ENCODE measurements at regions of chr2 and their contacts with region 1.

Region 1: DNA sequence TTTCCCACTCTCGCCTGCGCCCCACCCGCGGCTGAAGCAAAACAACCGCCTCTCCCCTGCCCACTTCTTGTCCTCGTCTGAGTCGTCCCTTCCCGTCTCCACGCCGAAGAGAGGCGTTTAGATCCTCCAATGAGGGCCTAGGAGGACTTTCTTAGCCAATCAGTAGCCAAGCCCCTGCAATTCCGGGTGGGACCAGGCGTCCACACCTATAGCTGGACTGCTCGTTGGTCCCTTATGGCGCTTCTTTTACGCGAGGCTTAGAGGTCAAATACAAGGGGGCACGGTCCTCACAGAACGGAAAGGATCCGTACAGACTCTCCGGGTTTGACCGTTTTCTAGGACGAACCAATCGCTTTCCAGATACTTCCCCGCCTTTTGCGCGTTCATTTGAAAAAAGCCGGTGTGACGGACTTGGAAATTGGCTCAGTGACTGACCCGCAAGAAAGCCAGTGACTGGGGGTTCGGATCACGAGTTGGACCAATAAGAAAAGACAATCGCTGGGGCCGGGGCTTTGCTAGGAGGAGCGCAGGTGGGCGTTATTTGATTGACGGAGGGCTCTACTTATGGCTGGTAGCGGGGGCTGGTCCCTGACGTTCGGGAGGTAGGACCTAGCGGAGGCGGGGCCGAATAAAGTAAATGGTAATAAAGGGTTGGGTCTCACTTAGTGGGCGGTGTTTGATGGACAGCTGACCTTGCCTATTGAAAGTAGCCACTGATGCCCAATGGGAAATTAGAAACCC is 565 bp upstream of the PPM1B start:
- DNase-seq: peak; percentile 99
- H3K4me3 Mint-ChIP-seq: peak overlapping the region; percentile 90
- H3K27ac Mint-ChIP-seq: peak overlapping the region; percentile 96
- H3K4me1 Mint-ChIP-seq: peaks cover 25% of the 10 kb centered on the region
- H3K27me3 Mint-ChIP-seq: no peaks in the 10 kb centered on the region

Region 2: GRCh38 chr2:43595603-43596412 is 572.3 kb before region 1 on chr2 and contains the start of gene THADA:
- CTCF ChIA-PET with region 1: no interaction called
- intact Hi-C with region 1: loop called (anchors 1 kb)
- DNase-seq: peak; percentile 99
- H3K4me3 Mint-ChIP-seq: peak within 1 kb of the TSS; percentile 94
- H3K27ac Mint-ChIP-seq: peak within 1 kb of the TSS; percentile 96
- H3K4me1 Mint-ChIP-seq: peaks cover 31% of the 10 kb centered on the region
- H3K27me3 Mint-ChIP-seq: no peaks in the 10 kb centered on the region
- total RNA-seq, gene THADA: 28.6 to 31.5 TPM

Region 3: GRCh38 chr2:43792653-43793052 is 375.5 kb before region 1 on chr2:
- CTCF ChIA-PET with region 1: no interaction called
- intact Hi-C with region 1: no loop called
- DNase-seq: no peak
- H3K4me3 Mint-ChIP-seq: no peak overlapping the region
- H3K27ac Mint-ChIP-seq: no peak overlapping the region
- H3K4me1 Mint-ChIP-seq: peaks cover 18% of the 10 kb centered on the region
- H3K27me3 Mint-ChIP-seq: no peaks in the 10 kb centered on the region

Region 4: DNA sequence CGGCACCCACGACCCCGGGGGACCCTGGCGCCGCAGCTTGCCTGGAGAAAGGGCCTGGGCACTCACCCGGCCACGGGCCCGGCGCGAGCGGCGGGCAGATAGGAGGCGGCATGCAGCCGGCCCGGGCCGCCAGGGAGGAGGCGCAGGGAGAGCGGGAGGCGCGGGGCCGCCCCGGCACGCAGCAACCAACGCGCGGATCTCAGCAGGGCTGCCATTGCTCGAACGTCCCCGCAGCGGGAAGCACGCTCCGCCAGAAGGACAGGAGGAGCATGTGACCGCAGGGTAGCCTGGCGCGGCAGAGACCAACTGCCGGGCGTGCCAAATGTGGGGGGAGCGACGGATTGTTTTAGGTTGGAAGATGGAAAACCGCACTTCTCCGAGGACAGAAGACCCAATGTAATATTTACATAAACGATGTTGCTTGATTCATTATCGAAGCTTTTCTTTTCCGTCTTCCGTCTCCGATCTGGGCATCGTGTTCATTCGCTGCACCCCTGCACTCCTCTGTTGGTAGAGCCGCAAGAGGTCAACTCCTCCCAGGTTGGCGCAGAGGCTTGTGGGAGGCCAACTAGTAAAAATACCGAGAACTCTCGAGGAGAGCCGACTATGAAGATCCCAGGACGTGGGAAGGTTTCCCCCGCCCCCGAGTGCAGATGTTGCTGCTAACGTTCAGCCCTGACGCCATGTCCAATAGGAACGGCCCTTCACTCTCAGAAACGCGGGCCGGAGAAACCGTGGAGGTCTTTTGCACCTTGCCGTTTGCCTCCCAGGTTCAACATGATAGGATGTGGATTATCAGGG is 172.2 kb before region 1 on chr2 and contains the start of gene LRPPRC:
- CTCF ChIA-PET with region 1: no interaction called
- intact Hi-C with region 1: loop called (anchors 1 kb)
- DNase-seq: peak; percentile 95
- H3K4me3 Mint-ChIP-seq: peak within 1 kb of the TSS; percentile 89
- H3K27ac Mint-ChIP-seq: peak within 1 kb of the TSS; percentile 93
- H3K4me1 Mint-ChIP-seq: peaks cover 36% of the 10 kb centered on the region
- H3K27me3 Mint-ChIP-seq: no peaks in the 10 kb centered on the region
- total RNA-seq, gene LRPPRC: 170 to 175 TPM

Region 5: GRCh38 chr2:44178950-44179349 is 10.8 kb after region 1 on chr2:
- CTCF ChIA-PET with region 1: no interaction called
- intact Hi-C with region 1: loop called (anchors 1 kb)
- DNase-seq: no peak
- H3K4me3 Mint-ChIP-seq: no peak overlapping the region
- H3K27ac Mint-ChIP-seq: no peak overlapping the region
- H3K4me1 Mint-ChIP-seq: peaks cover 74% of the 10 kb centered on the region
- H3K27me3 Mint-ChIP-seq: no peaks in the 10 kb centered on the region

Region 6: DNA sequence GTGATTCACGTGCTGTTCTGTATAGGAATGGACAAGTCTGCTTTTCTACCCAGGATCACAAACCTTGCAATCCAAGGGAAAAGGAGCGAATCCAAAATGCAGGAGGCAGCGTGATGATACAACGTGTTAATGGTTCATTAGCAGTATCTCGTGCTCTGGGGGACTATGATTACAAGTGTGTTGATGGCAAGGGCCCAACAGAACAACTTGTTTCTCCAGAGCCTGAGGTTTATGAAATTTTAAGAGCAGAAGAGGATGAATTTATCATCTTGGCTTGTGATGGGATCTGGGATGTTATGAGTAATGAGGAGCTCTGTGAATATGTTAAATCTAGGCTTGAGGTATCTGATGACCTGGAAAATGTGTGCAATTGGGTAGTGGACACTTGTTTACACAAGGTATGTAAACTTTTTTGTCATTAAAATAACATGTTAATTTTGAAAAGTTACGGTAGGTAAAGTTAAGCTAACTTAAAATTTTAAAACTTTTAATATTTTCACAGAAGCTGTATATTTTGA is 33.6 kb after region 1 on chr2:
- CTCF ChIA-PET with region 1: no interaction called
- intact Hi-C with region 1: no loop called
- DNase-seq: no peak
- H3K4me3 Mint-ChIP-seq: no peak overlapping the region
- H3K27ac Mint-ChIP-seq: no peak overlapping the region
- H3K4me1 Mint-ChIP-seq: peaks cover 63% of the 10 kb centered on the region
- H3K27me3 Mint-ChIP-seq: no peaks in the 10 kb centered on the region

Region 7: GRCh38 chr2:44237221-44237620 is 69.1 kb after region 1 on chr2:
- CTCF ChIA-PET with region 1: no interaction called
- intact Hi-C with region 1: loop called (anchors 2 kb)
- DNase-seq: peak; percentile 40
- H3K4me3 Mint-ChIP-seq: no peak overlapping the region
- H3K27ac Mint-ChIP-seq: no peak overlapping the region
- H3K4me1 Mint-ChIP-seq: peaks cover 32% of the 10 kb centered on the region
- H3K27me3 Mint-ChIP-seq: no peaks in the 10 kb centered on the region

Region 8: DNA sequence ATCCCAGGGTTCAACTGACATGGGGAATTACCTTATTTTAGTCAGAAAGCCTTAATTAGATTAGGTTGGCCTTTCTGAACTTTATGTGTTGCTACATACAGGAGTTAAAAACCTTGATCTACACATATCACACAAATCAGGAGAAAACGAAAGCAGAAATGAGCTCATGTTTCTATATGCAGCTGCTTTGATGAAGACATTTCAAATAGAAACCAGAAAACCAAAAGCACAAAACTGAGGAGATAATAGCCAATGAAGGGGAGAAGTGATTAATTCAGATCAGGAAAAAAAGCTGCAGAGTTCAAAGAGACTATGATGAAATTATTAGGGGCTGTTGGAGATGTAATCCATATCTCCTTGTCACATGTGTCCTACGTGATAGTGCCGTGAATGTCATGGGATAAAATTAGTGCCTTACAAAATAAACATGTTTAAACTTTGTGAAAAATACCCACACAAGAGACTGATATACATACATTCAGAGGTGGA is 448.6 kb after region 1 on chr2:
- CTCF ChIA-PET with region 1: no interaction called
- intact Hi-C with region 1: loop called (anchors 2 kb)
- DNase-seq: peak; percentile 22
- H3K4me3 Mint-ChIP-seq: no peak overlapping the region
- H3K27ac Mint-ChIP-seq: no peak overlapping the region
- H3K4me1 Mint-ChIP-seq: peaks cover 7% of the 10 kb centered on the region
- H3K27me3 Mint-ChIP-seq: no peaks in the 10 kb centered on the region

Measured in activated naive CD4-positive, alpha-beta T cell treated with anti-CD3 and anti-CD28 coated beads for 36 hours (primary cell).